SK-N-SH (cell line): ENCODE measurements at regions of chr22 and their contacts with region 1.

Region 1: DNA sequence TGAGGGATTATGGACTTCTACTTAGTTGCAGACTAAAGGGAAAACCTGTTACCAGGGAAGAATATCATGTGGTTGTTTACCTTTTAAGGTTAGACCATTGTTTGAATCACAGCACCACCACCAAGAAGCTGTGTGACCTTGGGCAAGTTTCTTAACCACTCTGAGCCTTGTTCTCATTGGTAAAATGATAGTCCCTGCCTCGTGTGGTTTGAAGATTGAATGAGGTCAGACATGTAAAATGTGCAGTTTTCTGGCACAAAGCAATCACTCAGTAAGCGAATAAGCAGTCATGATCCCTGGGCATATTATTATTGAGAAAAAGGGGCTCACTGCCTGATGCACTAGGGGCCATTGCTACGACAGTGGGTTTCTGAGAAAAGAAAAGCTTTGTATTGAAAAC is 28.3 kb downstream of the MOV10L1 start:
- DNase-seq: no peak
- H3K4me3 ChIP-seq: no peak overlapping the region
- H3K27ac ChIP-seq: peak overlapping the region in 1 of 2 experiments; percentile 63; a peak in 1 of 4 replicates
- H3K4me1 ChIP-seq: peaks cover 14 to 22% of the 10 kb centered on the region in 2 experiments; a peak in 3 of 4 replicates
- H3K27me3 ChIP-seq: no peaks in the 10 kb centered on the region
- CTCF ChIP-seq: no peak
- EP300 ChIP-seq: no peak
- RAD21 ChIP-seq: no peak

Region 2: GRCh38 chr22:50141891-50142363 is 23.8 kb after region 1 on chr22:
- CTCF ChIA-PET with region 1: interaction called, 10 read pairs
- POLR2A ChIA-PET with region 1: no interaction called
- DNase-seq: peak; percentile 54
- H3K4me3 ChIP-seq: no peak overlapping the region
- H3K27ac ChIP-seq: no peak overlapping the region
- H3K4me1 ChIP-seq: peaks cover 0 to 13% of the 10 kb centered on the region in 2 experiments; a peak in 1 of 4 replicates
- H3K27me3 ChIP-seq: no peaks in the 10 kb centered on the region
- CTCF ChIP-seq: no peak
- EP300 ChIP-seq: no peak
- RAD21 ChIP-seq: peak; percentile 26; the same call in 1 of the 2 replicates